K562 (cell line): ENCODE measurements at regions of chr2 and their contacts with region 1.

Region 1: DNA sequence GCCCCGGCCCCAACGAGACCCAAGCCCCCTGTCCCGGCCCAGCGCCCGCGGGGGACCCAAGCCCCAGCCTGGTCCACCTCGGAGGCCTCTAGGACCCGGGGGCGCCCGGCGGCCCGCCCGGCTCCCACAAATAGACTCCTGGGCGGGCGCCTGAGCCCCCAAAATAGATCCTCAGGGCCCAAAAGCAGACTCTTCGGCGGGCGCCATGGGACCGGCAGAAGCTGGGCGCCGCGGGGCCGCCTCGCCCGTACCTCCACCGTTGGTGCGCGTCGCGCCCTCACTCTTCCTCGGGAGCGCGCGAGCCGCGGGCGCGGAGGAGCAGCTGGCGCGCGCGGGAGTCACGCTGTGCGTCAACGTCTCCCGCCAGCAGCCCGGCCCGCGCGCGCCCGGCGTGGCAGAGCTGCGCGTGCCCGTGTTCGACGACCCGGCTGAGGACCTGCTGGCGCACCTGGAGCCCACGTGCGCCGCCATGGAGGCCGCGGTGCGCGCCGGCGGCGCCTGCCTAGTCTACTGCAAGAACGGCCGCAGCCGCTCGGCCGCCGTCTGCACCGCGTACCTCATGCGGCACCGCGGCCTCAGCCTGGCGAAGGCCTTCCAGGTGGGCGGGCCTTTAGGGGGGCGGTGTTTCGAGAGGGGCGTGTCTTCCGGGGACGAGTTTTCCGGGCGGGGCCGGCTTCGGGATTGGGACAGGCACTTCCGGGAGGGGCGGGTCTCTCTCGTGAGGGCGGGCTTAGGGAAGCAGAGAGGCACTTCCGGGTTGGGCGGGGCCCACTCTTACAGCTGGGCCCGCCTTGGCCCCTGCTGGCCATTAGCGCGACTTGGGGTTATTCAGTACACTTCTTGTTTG is 546 bp downstream of the DUSP28 start:
- DNase-seq: peak; percentile 79 to 96 (median 88)
- ATAC-seq: peak; percentile 76
- H3K4me3 ChIP-seq: peak overlapping the region; percentile 77
- H3K27ac ChIP-seq: peak overlapping the region; percentile 96
- H3K4me1 ChIP-seq: peaks cover 42 to 58% of the 10 kb centered on the region in 2 experiments
- H3K27me3 ChIP-seq: no peaks in the 10 kb centered on the region
- CTCF ChIP-seq: peak in 2 of 3 experiments; percentile 14 to 16; a peak in 3 of 6 replicates
- EP300 ChIP-seq: no peak; the same call in 1 of the 2 replicates
- POLR2A ChIP-seq: peak; percentile 62; the same call in 1 of the 2 replicates
- RAD21 ChIP-seq: no peak

Region 2: DNA sequence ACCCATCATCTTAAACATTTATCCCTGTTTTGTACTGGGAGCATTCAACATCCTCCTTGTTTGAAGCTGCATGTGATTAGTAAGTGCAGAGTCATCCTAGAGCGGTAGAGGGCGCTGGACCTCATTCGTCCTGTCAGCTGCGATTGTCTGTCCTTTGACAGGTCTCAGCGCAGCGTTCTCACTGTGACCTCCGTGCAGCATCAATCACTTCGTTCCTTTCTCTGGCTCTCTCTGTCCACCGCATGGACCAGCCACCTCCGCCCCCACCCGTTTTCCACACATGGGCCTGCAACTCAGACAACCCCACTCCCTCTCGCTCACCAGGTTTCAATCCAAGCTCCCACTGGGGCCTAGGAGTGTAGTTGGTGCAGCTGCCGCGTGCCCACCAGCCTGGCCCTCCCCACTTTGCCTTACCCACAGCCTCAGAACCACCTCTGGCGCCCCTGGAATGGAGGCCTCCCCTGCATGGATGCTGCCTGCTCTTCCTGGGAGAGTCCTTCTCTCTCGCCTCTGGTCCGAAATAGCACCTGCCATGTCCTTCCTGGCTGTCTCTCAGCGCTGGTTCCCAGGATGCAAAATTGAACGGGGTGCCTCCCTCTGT is 626.0 kb before region 1 on chr2:
- CTCF ChIA-PET with region 1: no interaction called
- POLR2A ChIA-PET with region 1: no interaction called
- in situ Hi-C with region 1: no loop called
- intact Hi-C with region 1: no loop called
- DNase-seq: peak; percentile 36 to 61 (median 52)
- ATAC-seq: peak; percentile 85
- H3K4me3 ChIP-seq: no peak overlapping the region
- H3K27ac ChIP-seq: no peak overlapping the region
- H3K4me1 ChIP-seq: no peaks in the 10 kb centered on the region; a peak in 1 of 5 replicates
- H3K27me3 ChIP-seq: no peaks in the 10 kb centered on the region
- CTCF ChIP-seq: peak; percentile 46 to 63 (median 58)
- EP300 ChIP-seq: no peak
- POLR2A ChIP-seq: no peak
- RAD21 ChIP-seq: no peak

Region 3: GRCh38 chr2:240513549-240514287 is 47.0 kb before region 1 on chr2:
- CTCF ChIA-PET with region 1: no interaction called
- POLR2A ChIA-PET with region 1: no interaction called
- in situ Hi-C with region 1: no loop called
- intact Hi-C with region 1: loop called (anchors 10 kb)
- DNase-seq: peak; percentile 79 to 82 (median 80)
- ATAC-seq: peak; percentile 100
- H3K4me3 ChIP-seq: no peak overlapping the region
- H3K27ac ChIP-seq: no peak overlapping the region
- H3K4me1 ChIP-seq: peaks cover 2 to 9% of the 10 kb centered on the region in 2 experiments; a peak in 2 of 5 replicates
- H3K27me3 ChIP-seq: no peaks in the 10 kb centered on the region
- CTCF ChIP-seq: peak; percentile 83 to 89 (median 83)
- EP300 ChIP-seq: no peak
- POLR2A ChIP-seq: no peak
- RAD21 ChIP-seq: peak; percentile 73 to 85

Region 4: DNA sequence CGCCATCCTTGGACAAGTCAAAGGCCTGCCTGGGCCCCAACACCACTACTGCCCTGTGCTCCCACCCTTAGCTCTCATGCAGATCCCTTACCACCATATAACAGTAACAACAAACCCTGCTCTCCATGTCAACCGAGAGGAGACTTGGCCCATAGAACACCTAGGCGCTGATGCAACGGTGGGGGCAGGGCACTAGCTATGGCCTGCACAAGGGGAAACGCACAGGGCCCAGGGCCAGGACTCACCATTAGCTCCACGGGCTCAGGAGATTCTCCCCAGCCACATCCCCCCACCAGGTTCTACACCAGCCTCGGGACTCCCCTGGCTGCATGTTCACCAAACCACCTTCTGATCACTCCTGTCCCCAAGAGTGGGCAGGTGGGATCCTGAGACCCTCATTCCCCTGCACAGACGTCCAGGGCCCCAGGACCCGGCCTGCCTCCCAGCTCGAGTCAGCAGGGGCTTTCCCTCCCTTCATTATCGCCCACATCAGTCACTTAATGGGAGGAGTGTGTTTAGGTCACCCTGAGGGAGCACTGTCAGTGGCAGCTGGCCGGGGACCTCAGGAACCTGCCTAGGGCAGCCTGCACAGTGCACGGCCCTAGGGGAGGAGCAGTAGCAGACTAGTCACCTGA is 32.2 kb before region 1 on chr2:
- CTCF ChIA-PET with region 1: no interaction called
- POLR2A ChIA-PET with region 1: no interaction called
- in situ Hi-C with region 1: no loop called
- intact Hi-C with region 1: no loop called
- DNase-seq: no peak
- ATAC-seq: no peak
- H3K4me3 ChIP-seq: no peak overlapping the region
- H3K27ac ChIP-seq: no peak overlapping the region
- H3K4me1 ChIP-seq: no peaks in the 10 kb centered on the region; a peak in 1 of 5 replicates
- H3K27me3 ChIP-seq: no peaks in the 10 kb centered on the region
- CTCF ChIP-seq: no peak
- EP300 ChIP-seq: no peak
- POLR2A ChIP-seq: no peak
- RAD21 ChIP-seq: no peak

Region 5: DNA sequence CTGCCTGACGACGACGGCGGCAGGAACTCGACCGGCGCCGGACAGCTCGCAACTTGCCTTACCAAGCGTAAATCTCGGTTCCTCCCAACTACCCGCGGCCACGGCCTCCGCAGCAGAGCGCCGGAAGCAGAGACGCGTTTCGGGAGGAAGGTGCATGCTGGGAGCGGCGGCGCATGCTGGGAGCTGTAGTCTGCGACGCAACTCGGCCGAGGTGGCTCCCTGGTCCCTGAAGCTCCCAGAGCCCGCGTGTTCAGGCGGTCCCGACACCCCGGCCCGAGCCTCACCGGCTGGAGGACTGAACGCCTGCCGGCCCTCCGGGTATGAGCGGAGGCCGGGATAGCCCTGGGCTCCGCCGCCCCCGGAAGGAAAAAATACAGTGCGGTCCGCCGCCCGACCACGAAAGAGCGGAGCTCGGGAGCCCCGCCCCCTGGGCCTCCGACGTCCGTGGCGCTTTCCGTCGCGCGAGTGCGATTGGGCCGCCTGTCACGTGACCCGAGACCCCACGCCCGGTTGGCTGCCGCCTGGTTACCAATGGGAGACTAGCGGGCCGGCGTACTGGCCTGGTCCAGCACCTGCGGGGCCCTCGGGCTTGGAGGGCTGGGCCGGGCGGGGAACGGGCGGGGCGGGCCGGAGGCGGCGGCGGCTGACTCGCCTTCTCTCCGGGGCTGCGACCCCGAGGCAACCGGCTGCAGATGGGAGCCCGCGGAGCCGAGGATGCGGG is 25.7 kb after region 1 on chr2 and contains the start of gene CAPN10:
- CTCF ChIA-PET with region 1: no interaction called
- POLR2A ChIA-PET with region 1: interaction called, 26 read pairs
- in situ Hi-C with region 1: no loop called
- intact Hi-C with region 1: loop called (anchors 1 kb)
- DNase-seq: peak; percentile 90 to 94 (median 92)
- ATAC-seq: peak; percentile 89
- H3K4me3 ChIP-seq: peak within 1 kb of the TSS; percentile 92
- H3K27ac ChIP-seq: peak within 1 kb of the TSS; percentile 87; the same call in 2 of the 3 replicates
- H3K4me1 ChIP-seq: peaks cover 31 to 51% of the 10 kb centered on the region in 2 experiments
- H3K27me3 ChIP-seq: no peaks in the 10 kb centered on the region
- CTCF ChIP-seq: no peak
- EP300 ChIP-seq: no peak
- POLR2A ChIP-seq: peak; percentile 79
- RAD21 ChIP-seq: no peak
- polyA plus RNA-seq, gene CAPN10: 0.08 to 0.41 TPM

Region 6: DNA sequence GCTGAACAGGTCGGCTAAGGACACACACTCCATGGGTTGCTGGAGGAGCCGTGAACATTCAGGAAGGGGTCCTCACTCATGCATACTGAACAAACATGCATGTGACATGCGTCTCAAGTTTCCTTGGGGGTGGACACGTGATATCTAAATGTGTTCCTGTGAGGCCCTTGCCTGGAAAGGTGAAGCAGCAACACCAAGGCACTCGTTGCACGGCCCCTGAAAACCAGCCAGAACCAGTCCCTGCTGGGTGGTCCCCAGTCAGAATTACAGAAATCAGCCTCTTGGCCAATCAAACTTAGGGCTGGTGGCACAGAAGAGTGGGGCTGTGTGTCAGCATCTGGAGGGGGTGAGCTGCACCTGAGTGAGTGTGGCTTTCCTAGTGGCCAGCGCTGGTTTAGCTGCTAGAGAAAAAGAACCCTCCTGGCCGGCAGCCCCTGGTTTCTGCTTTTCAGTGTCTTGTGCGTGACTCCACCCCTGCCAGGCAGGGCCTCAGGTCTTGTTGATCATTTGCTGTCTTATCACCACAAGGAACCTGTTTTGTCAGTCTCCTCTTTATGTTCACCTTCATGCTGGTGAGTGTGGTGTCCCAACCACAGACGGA is 125.2 kb after region 1 on chr2:
- CTCF ChIA-PET with region 1: no interaction called
- POLR2A ChIA-PET with region 1: no interaction called
- in situ Hi-C with region 1: no loop called
- intact Hi-C with region 1: no loop called
- DNase-seq: peak; percentile 7 to 31 (median 24)
- ATAC-seq: peak; percentile 62
- H3K4me3 ChIP-seq: no peak overlapping the region
- H3K27ac ChIP-seq: no peak overlapping the region
- H3K4me1 ChIP-seq: no peaks in the 10 kb centered on the region
- H3K27me3 ChIP-seq: peaks cover 0 to 33% of the 10 kb centered on the region in 2 experiments; a peak in 3 of 5 replicates
- CTCF ChIP-seq: no peak
- EP300 ChIP-seq: no peak
- POLR2A ChIP-seq: no peak
- RAD21 ChIP-seq: no peak

Region 7: GRCh38 chr2:240780023-240780700 is 219.5 kb after region 1 on chr2:
- CTCF ChIA-PET with region 1: no interaction called
- POLR2A ChIA-PET with region 1: no interaction called
- in situ Hi-C with region 1: no loop called
- intact Hi-C with region 1: no loop called
- DNase-seq: no peak
- ATAC-seq: no peak
- H3K4me3 ChIP-seq: no peak overlapping the region
- H3K27ac ChIP-seq: no peak overlapping the region
- H3K4me1 ChIP-seq: peaks cover 0 to 16% of the 10 kb centered on the region in 2 experiments; a peak in 1 of 5 replicates
- H3K27me3 ChIP-seq: peaks cover 0 to 18% of the 10 kb centered on the region in 2 experiments; a peak in 3 of 5 replicates
- CTCF ChIP-seq: no peak
- EP300 ChIP-seq: no peak
- POLR2A ChIP-seq: no peak
- RAD21 ChIP-seq: no peak